CD4-positive, alpha-beta T cell (primary cell): ENCODE measurements at regions of chr4 and their contacts with region 1.

Region 1: GRCh38 chr4:102826890-102827673 is at the start of gene UBE2D3:
- DNase-seq: peak; percentile 92 to 98 (median 94)
- ATAC-seq: peak; percentile 39
- H3K4me3 ChIP-seq: peak within 1 kb of the TSS; percentile 89
- H3K4me3 Mint-ChIP-seq: no peak within 1 kb of the TSS
- H3K27ac ChIP-seq: peak within 1 kb of the TSS; percentile 99 to 100
- H3K27ac Mint-ChIP-seq: no peak within 1 kb of the TSS
- H3K4me1 ChIP-seq: peaks cover 14% of the 10 kb centered on the region
- H3K4me1 Mint-ChIP-seq: peaks cover 31% of the 10 kb centered on the region
- H3K27me3 ChIP-seq: no peaks in the 10 kb centered on the region
- H3K27me3 Mint-ChIP-seq: no peaks in the 10 kb centered on the region
- CTCF ChIP-seq: no peak
- total RNA-seq, gene UBE2D3: 659 to 719 TPM

Region 2: DNA sequence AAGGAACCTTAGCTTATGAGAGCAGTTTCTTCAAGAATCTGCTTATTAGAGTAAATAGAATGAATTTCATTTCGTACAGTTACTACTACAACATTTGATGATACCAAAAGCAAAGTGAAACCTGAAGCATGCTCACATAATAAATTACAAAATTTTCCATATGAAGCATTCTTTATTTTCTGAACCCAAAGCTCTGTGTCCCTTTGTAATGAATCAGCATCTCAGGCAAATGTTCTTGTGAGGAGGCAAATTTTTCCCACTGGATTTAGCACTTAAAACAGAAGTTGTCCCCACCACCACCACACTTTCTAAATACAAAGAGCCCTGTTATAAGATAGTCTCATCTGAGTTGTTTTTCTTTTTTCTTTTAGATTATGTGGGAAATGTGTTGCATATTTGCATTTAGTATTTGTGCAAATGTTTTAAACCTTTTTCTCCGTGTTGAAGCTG is 396.6 kb before region 1 on chr4:
- CTCF ChIA-PET with region 1: interaction called, 4 read pairs
- POLR2A ChIA-PET with region 1: interaction called, 12 read pairs
- intact Hi-C with region 1: loop called in 1 of 2 experiments (anchors 10 kb)
- DNase-seq: peak in 1 of 14 experiments; percentile 13
- ATAC-seq: no peak
- H3K4me3 ChIP-seq: peak overlapping the region; percentile 66
- H3K4me3 Mint-ChIP-seq: peak overlapping the region; percentile 87
- H3K27ac ChIP-seq: no peak overlapping the region
- H3K27ac Mint-ChIP-seq: peak overlapping the region; percentile 74
- H3K4me1 ChIP-seq: no peaks in the 10 kb centered on the region
- H3K4me1 Mint-ChIP-seq: peaks cover 6% of the 10 kb centered on the region
- H3K27me3 ChIP-seq: no peaks in the 10 kb centered on the region
- H3K27me3 Mint-ChIP-seq: no peaks in the 10 kb centered on the region
- CTCF ChIP-seq: no peak

Region 3: DNA sequence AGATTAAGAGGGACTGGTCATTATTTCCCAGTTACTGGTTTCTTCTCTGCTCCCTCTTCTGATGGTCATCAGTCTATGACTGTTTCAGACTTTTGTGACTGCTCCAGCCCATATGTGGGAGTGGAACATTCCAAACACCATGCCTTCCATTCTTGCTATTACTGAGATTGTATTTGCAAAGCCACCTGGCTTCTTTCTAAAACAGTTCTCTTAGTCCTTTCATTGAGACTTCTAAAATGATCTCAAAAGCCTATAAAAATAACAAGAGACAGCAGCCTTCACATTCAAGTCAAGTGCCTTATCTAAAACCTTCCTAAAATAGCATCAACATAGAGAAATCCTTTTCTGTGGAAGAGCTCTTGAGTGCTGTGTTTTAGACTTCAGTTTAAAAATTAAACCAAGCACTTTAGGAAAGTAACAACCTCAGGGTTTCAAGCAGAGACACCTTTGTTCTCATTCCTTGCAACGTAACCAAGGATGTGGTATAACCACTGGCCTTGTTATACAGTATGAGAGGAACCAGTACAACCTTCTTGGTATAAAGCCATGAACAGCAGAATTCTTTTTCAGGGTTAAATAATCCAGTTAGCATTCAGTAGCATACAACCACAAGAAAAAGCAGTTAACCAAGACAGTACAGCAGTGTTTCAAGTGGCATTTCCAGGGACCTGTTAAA is 228.9 kb before region 1 on chr4:
- CTCF ChIA-PET with region 1: no interaction called
- POLR2A ChIA-PET with region 1: no interaction called
- intact Hi-C with region 1: no loop called
- DNase-seq: peak in 3 of 14 experiments; percentile 61 to 86 (median 69)
- ATAC-seq: peak; percentile 89
- H3K4me3 ChIP-seq: no peak overlapping the region
- H3K4me3 Mint-ChIP-seq: peak overlapping the region; percentile 32
- H3K27ac ChIP-seq: peak overlapping the region in 1 of 2 donors; percentile 63
- H3K27ac Mint-ChIP-seq: peak overlapping the region; percentile 82
- H3K4me1 ChIP-seq: peaks cover 36% of the 10 kb centered on the region
- H3K4me1 Mint-ChIP-seq: peaks cover 74% of the 10 kb centered on the region
- H3K27me3 ChIP-seq: no peaks in the 10 kb centered on the region
- H3K27me3 Mint-ChIP-seq: no peaks in the 10 kb centered on the region
- CTCF ChIP-seq: no peak

Region 4: DNA sequence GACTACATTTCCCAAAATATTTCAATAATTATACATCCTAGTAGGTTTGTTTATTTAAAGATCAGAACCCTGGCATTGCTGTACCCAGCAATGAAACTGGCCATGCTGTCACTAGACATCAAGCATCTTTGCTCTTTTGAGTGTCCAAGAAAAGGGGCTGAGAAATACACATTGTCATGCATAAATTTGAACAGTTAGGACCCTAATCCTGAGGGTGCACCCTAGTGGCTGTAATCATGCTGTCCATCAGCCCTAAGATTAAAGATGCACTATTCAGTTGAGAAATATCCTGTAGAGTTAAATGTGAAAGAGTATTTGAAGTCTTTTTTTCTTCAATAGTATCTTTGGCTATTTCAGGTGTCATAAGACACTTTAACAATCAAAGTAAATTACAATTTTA is 217.1 kb before region 1 on chr4:
- CTCF ChIA-PET with region 1: no interaction called
- POLR2A ChIA-PET with region 1: interaction called, 19 read pairs
- intact Hi-C with region 1: loop called in 1 of 2 experiments (anchors 2 kb)
- DNase-seq: no peak
- ATAC-seq: no peak
- H3K4me3 ChIP-seq: no peak overlapping the region
- H3K4me3 Mint-ChIP-seq: no peak overlapping the region
- H3K27ac ChIP-seq: no peak overlapping the region
- H3K27ac Mint-ChIP-seq: no peak overlapping the region
- H3K4me1 ChIP-seq: peaks cover 42% of the 10 kb centered on the region
- H3K4me1 Mint-ChIP-seq: peaks cover 74% of the 10 kb centered on the region
- H3K27me3 ChIP-seq: no peaks in the 10 kb centered on the region
- H3K27me3 Mint-ChIP-seq: no peaks in the 10 kb centered on the region
- CTCF ChIP-seq: no peak

Region 5: DNA sequence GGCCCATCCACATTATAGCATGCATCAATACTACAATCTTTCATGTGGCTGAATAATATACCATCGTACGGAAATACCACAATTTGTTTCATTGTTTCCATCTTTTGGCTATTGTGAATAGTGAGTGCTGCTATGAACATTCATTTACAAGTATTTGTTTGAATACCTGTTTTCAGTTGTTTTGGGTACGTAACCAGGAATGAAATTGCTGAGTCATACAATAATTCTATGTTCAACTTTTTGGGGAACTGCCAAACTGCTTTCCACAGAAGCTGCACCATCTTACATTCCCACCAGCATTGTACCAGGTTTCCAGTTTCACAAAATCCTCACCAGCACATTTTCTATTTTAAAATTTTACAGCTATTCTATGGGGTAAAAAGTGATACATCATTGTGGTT is 37.8 kb before region 1 on chr4:
- CTCF ChIA-PET with region 1: interaction called, 7 read pairs
- POLR2A ChIA-PET with region 1: interaction called, 41 read pairs
- intact Hi-C with region 1: loop called (anchors 5 kb)
- DNase-seq: no peak
- ATAC-seq: no peak
- H3K4me3 ChIP-seq: no peak overlapping the region
- H3K4me3 Mint-ChIP-seq: no peak overlapping the region
- H3K27ac ChIP-seq: no peak overlapping the region
- H3K27ac Mint-ChIP-seq: no peak overlapping the region
- H3K4me1 ChIP-seq: no peaks in the 10 kb centered on the region
- H3K4me1 Mint-ChIP-seq: peaks cover 5% of the 10 kb centered on the region
- H3K27me3 ChIP-seq: no peaks in the 10 kb centered on the region
- H3K27me3 Mint-ChIP-seq: no peaks in the 10 kb centered on the region
- CTCF ChIP-seq: no peak

Region 6: DNA sequence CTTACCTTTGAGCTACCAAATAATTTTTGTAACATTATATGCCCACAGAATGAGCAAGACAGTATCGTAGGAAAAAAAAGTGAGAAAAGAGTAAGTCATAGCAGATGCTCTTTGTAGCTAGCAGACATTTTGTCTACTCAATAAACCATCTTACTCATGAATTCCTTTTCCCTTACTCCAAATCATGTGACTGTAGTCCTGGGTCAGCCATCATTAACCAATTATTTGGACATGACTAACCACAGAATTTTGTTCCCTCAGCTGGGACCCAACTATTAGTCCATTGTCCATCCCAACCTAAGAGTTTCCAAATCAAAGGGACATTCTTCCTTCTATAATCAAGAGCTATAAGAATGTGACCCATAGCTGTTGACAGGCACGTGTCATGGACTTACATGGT is 11.1 kb before region 1 on chr4:
- CTCF ChIA-PET with region 1: interaction called, 18 read pairs
- POLR2A ChIA-PET with region 1: interaction called, 193 read pairs
- intact Hi-C with region 1: loop called (anchors 1 to 2 kb)
- DNase-seq: no peak
- ATAC-seq: no peak
- H3K4me3 ChIP-seq: no peak overlapping the region
- H3K4me3 Mint-ChIP-seq: peak overlapping the region; percentile 78
- H3K27ac ChIP-seq: peak overlapping the region in 1 of 2 donors; percentile 1
- H3K27ac Mint-ChIP-seq: peak overlapping the region; percentile 78
- H3K4me1 ChIP-seq: peaks cover 47% of the 10 kb centered on the region
- H3K4me1 Mint-ChIP-seq: peaks cover 92% of the 10 kb centered on the region
- H3K27me3 ChIP-seq: no peaks in the 10 kb centered on the region
- H3K27me3 Mint-ChIP-seq: no peaks in the 10 kb centered on the region
- CTCF ChIP-seq: no peak

Region 7: GRCh38 chr4:103019308-103020124 is 192.4 kb after region 1 on chr4 and contains the start of gene SLC9B1:
- CTCF ChIA-PET with region 1: no interaction called
- POLR2A ChIA-PET with region 1: interaction called, 19 read pairs
- intact Hi-C with region 1: loop called (anchors 2 to 5 kb)
- DNase-seq: peak; percentile 84 to 96 (median 91)
- ATAC-seq: peak; percentile 89
- H3K4me3 ChIP-seq: peak within 1 kb of the TSS; percentile 64
- H3K4me3 Mint-ChIP-seq: peak within 1 kb of the TSS; percentile 91
- H3K27ac ChIP-seq: peak within 1 kb of the TSS; percentile 65 to 94
- H3K27ac Mint-ChIP-seq: peak within 1 kb of the TSS; percentile 99
- H3K4me1 ChIP-seq: peaks cover 22% of the 10 kb centered on the region
- H3K4me1 Mint-ChIP-seq: peaks cover 25% of the 10 kb centered on the region
- H3K27me3 ChIP-seq: no peaks in the 10 kb centered on the region
- H3K27me3 Mint-ChIP-seq: no peaks in the 10 kb centered on the region
- CTCF ChIP-seq: no peak
- total RNA-seq, gene SLC9B1: 3.6 to 3.7 TPM